HEK293 (cell line): ENCODE measurements at regions of chr6 and their contacts with region 1.

Region 1: DNA sequence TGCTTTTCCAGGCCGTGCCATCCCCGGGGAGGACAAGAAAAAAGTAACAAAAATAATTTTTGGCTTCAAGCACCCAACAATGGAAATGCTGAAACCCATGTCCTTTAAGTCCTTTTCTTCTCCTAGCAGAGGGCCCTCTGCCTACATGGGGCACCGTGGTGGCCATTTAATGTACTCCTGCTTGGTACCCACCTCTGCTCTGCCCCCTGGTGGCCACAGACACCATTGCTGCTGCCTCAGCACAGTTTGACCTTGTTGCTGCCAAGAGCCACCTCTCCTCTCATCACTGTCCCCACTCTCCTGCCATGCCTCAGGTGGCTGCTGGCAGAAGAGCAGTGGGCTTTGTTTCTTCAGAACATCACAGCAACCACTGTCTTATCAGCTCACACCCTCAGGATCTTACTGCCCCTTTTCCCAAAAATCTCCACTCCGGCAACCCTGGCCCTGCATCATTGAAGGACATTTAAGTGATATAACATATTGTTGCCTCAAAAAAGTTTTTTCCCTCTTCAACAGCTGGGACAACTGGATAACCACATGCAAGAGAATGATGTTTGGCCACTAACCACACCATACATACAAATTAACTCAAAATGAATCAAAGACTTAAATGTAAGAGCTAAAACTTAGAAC is 12.9 kb upstream of the ARMC2 start:
- H3K4me3 ChIP-seq: no peak overlapping the region
- H3K27ac ChIP-seq: no peak overlapping the region
- H3K4me1 ChIP-seq: no peaks in the 10 kb centered on the region
- CTCF ChIP-seq: peak; percentile 92

Region 2: GRCh38 chr6:108518714-108519576 is 316.4 kb before region 1 on chr6:
- CTCF ChIA-PET with region 1: interaction called, 10 read pairs
- POLR2A ChIA-PET with region 1: no interaction called
- H3K4me3 ChIP-seq: no peak overlapping the region
- H3K27ac ChIP-seq: no peak overlapping the region
- H3K4me1 ChIP-seq: no peaks in the 10 kb centered on the region
- CTCF ChIP-seq: no peak; the same call in 1 of the 2 replicates

Region 3: GRCh38 chr6:108848116-108848868 is 13.0 kb after region 1 on chr6 and contains the start of gene ARMC2:
- CTCF ChIA-PET with region 1: interaction called, 33 read pairs
- POLR2A ChIA-PET with region 1: interaction called, 7 read pairs
- H3K4me3 ChIP-seq: peak within 1 kb of the TSS; percentile 72
- H3K27ac ChIP-seq: no peak within 1 kb of the TSS; the same call in 1 of the 2 replicates
- H3K4me1 ChIP-seq: peaks cover 4% of the 10 kb centered on the region; the same call in 1 of the 2 replicates
- CTCF ChIP-seq: no peak

Region 4: DNA sequence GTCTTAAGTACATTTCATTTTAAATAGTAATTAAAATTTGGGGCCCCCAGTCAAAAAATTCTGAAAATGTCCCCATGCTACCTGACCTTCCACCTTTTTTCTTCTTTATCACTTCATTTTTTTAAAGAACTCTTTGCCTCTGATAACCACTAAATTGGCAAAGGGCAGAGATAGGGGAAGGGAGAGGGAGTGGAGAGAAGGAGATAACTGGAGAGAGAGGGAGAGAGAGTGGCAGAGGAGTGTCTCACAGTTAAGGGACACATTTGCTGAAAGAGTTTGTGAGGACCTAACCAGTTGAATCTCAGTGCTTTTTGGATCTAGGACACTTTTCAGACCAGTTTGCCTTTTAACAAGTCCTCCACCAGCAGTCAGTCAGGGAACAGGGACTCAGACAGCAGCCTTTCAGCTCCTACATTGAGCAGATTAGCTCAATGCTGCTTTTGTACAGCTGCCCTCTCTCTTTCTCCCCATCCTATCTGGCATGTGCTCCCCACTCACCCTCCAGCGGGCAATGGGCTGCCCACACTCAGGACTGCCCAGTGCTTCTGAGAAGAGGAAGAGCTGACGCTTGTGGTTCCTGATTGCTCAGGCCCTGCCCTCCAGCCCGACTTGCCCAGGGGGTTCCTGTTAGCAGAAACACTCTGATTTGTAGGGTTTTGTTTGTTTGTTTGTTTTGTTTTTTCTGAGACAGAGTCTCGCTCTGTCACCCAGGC is 27.3 kb after region 1 on chr6:
- CTCF ChIA-PET with region 1: interaction called, 14 read pairs
- POLR2A ChIA-PET with region 1: no interaction called
- H3K4me3 ChIP-seq: no peak overlapping the region
- H3K27ac ChIP-seq: no peak overlapping the region
- H3K4me1 ChIP-seq: no peaks in the 10 kb centered on the region
- CTCF ChIP-seq: no peak

Region 5: GRCh38 chr6:108896111-108896661 is 60.9 kb after region 1 on chr6:
- CTCF ChIA-PET with region 1: interaction called, 13 read pairs
- POLR2A ChIA-PET with region 1: no interaction called
- H3K4me3 ChIP-seq: no peak overlapping the region
- H3K27ac ChIP-seq: no peak overlapping the region
- H3K4me1 ChIP-seq: no peaks in the 10 kb centered on the region
- CTCF ChIP-seq: no peak

Region 6: GRCh38 chr6:109279628-109280027 is 444.3 kb after region 1 on chr6:
- CTCF ChIA-PET with region 1: no interaction called
- POLR2A ChIA-PET with region 1: no interaction called
- H3K4me3 ChIP-seq: no peak overlapping the region
- H3K27ac ChIP-seq: no peak overlapping the region
- H3K4me1 ChIP-seq: no peaks in the 10 kb centered on the region
- CTCF ChIP-seq: no peak

Region 7: GRCh38 chr6:109382576-109383437 is 547.5 kb after region 1 on chr6:
- CTCF ChIA-PET with region 1: no interaction called
- POLR2A ChIA-PET with region 1: no interaction called
- H3K4me3 ChIP-seq: peak overlapping the region; percentile 78
- H3K27ac ChIP-seq: peak overlapping the region; percentile 98
- H3K4me1 ChIP-seq: peaks cover 8% of the 10 kb centered on the region
- CTCF ChIP-seq: peak; percentile 55